ENCODE measurements at regions of chr20 and their contacts with region 1.

Region 1: GRCh38 chr20:38113401-38114325 is 51.4 kb downstream of the TGM2 start:
- DNase-seq: peak; percentile 50
- H3K4me3 Mint-ChIP-seq: no peak overlapping the region
- H3K27ac Mint-ChIP-seq: peak overlapping the region; percentile 25
- H3K4me1 Mint-ChIP-seq: peaks cover 16% of the 10 kb centered on the region
- H3K27me3 Mint-ChIP-seq: peaks cover 18% of the 10 kb centered on the region

Region 2: GRCh38 chr20:38094373-38094891 is 19.2 kb before region 1 on chr20:
- CTCF ChIA-PET with region 1: interaction called, 10 read pairs
- POLR2A ChIA-PET with region 1: no interaction called
- DNase-seq: peak; percentile 53
- H3K4me3 Mint-ChIP-seq: no peak overlapping the region
- H3K27ac Mint-ChIP-seq: peak overlapping the region; percentile 21
- H3K4me1 Mint-ChIP-seq: peaks cover 41% of the 10 kb centered on the region
- H3K27me3 Mint-ChIP-seq: peaks cover 3% of the 10 kb centered on the region

Region 3: GRCh38 chr20:38337561-38338140 is 224.0 kb after region 1 on chr20:
- CTCF ChIA-PET with region 1: no interaction called
- POLR2A ChIA-PET with region 1: no interaction called
- DNase-seq: peak; percentile 21
- H3K4me3 Mint-ChIP-seq: no peak overlapping the region
- H3K27ac Mint-ChIP-seq: no peak overlapping the region
- H3K4me1 Mint-ChIP-seq: no peaks in the 10 kb centered on the region
- H3K27me3 Mint-ChIP-seq: peaks cover 10% of the 10 kb centered on the region

Measured in activated CD4-positive, alpha-beta memory T cell treated with anti-CD3 and anti-CD28 coated beads, Interleukin-2, amount 10 ng/mL, durations not matched to agents 7 days and 5 days (primary cell).